ENCODE measurements at regions of chr12 and their contacts with region 1.

Region 1: DNA sequence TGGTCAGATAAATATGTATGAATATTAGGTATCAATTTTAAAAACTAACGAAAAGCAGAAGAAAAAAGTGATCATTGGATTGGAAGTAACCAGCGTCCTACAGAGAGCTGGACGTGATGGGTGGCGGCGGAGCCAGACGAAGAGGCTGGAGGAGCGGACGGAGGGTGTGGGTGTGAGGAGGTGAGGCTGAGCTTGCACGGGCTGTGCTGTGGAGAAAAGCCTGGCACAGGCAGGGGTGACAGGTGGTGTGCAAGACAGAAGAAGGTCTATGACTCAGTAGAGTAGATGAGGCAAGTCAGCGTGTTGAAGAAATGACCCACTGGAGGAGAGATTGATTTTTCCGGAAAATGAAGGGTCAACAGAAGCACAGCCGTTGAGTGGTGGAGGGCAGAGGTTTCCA is 56.4 kb downstream of the FZD10 start:
- DNase-seq: no peak
- ATAC-seq: no peak

Region 2: DNA sequence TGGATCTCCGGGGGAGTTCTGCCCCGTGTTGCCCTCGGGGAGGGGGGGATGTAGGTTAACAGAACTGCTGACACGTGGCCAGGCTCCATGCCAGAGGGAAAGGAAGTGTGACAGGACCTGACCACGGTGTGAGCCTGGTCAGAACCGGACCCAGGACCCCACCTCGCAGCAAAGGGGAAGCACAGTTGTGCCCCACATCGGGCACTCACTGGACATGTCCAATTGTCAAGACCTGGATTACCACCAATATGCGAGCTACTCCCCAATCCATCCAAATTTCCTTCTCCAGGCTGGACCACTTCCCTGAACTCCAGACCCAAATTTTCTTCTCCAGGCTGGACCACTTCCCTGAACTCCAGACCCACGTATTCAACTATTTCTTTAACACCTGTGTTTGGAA is 40.2 kb after region 1 on chr12:
- intact Hi-C with region 1: loop called (anchors 1 kb)
- DNase-seq: no peak
- ATAC-seq: no peak